ENCODE measurements at regions of chr12 and their contacts with region 1.

Region 1: GRCh38 chr12:111396726-111397445 is 8.8 kb upstream of the SH2B3 start:
- DNase-seq: peak; percentile 75 to 95 (median 88)
- ATAC-seq: peak; percentile 94
- H3K4me3 ChIP-seq: peak overlapping the region; percentile 27 to 33
- H3K4me3 Mint-ChIP-seq: peak overlapping the region; percentile 70
- H3K27ac ChIP-seq: no peak overlapping the region
- H3K27ac Mint-ChIP-seq: no peak overlapping the region
- H3K4me1 ChIP-seq: peaks cover 9% of the 10 kb centered on the region
- H3K4me1 Mint-ChIP-seq: peaks cover 6% of the 10 kb centered on the region
- H3K27me3 ChIP-seq: no peaks in the 10 kb centered on the region
- H3K27me3 Mint-ChIP-seq: no peaks in the 10 kb centered on the region
- CTCF ChIP-seq: peak; percentile 97

Region 2: DNA sequence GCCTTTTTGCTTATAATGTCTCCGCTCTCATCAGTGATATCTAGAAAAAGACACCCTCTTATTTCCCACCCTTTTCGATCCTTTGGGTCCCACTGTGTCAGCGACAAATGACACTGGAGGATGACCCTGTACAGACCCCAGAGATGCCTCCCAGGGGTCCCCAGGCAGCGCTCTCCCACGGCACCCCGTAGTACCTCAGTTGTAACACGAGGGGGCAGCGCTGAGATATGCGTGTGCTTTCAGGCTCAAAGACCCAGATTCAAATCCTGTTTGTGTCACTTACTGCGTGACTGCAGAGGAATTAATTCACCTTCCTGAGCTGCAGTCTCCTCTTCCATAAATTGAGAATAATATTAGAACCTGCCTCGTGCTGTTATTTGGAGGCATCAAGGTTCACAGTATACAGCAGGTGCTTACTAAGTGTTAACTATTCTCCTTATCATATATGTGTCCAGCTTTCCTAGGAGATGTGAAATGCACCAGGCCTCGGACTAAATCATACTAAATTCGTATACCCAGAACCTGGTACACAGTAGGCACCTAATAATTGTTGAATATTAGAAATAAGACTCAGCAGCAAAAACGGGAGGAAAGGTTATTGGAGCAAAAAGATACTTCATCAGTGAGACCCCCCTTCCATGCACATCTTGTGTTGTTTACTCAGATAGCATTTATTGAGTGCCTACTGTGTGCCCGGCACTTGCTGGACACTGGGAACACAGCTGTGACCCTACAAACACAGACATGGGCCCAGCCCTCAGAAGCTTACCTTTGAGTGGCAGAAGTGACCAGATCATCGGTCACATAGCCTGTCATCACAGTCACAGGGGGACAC is 127.9 kb before region 1 on chr12:
- CTCF ChIA-PET with region 1: no interaction called
- POLR2A ChIA-PET with region 1: no interaction called
- intact Hi-C with region 1: no loop called
- DNase-seq: peak in 4 of 9 experiments; percentile 1 to 23 (median 14)
- ATAC-seq: no peak
- H3K4me3 ChIP-seq: no peak overlapping the region
- H3K4me3 Mint-ChIP-seq: no peak overlapping the region
- H3K27ac ChIP-seq: no peak overlapping the region
- H3K27ac Mint-ChIP-seq: no peak overlapping the region
- H3K4me1 ChIP-seq: no peaks in the 10 kb centered on the region
- H3K4me1 Mint-ChIP-seq: peaks cover 2% of the 10 kb centered on the region
- H3K27me3 ChIP-seq: no peaks in the 10 kb centered on the region
- H3K27me3 Mint-ChIP-seq: peaks cover 7% of the 10 kb centered on the region
- CTCF ChIP-seq: peak; percentile 44

Region 3: DNA sequence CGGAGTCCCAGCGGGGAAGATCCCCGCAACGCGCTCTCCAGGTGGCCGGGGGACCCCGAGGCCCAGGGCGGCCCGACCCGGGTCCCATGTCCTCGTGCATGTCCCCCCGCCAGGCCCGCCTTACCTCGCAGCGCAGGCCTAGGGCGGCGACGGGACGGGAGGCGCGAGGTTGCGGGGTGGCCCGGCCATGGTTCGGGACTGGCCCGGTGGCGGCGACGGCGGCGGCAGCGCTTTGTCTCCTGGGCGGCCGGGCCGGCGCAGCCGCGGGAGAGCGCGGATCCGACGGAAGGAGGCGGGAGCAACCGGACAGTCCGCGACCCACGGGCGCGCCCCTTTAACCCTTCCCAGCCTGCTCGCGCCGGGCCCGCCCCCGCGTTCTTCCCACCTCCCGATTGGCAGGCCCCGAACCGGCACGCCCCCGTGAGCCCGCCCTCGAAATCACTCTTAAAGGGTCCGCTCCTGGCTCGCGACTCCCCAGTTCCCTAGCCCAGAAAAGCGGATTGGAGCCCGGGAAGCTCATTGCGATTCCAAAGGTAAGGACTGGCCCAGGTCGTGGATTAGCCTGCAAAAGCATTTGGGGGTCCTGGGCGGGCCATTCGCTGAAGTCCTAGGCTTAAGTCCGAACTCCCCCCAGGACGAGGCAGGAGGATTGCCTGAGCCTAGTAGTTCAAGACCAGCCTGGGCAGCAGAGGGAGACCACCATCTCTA is 27.9 kb before region 1 on chr12 and contains the start of gene PHETA1:
- CTCF ChIA-PET with region 1: interaction called, 15 read pairs
- POLR2A ChIA-PET with region 1: no interaction called
- intact Hi-C with region 1: no loop called
- DNase-seq: peak; percentile 41 to 83 (median 73)
- ATAC-seq: peak; percentile 94
- H3K4me3 ChIP-seq: peak within 1 kb of the TSS; percentile 64 to 66
- H3K4me3 Mint-ChIP-seq: peak within 1 kb of the TSS; percentile 87
- H3K27ac ChIP-seq: no peak within 1 kb of the TSS
- H3K27ac Mint-ChIP-seq: peak within 1 kb of the TSS; percentile 37
- H3K4me1 ChIP-seq: peaks cover 20% of the 10 kb centered on the region
- H3K4me1 Mint-ChIP-seq: peaks cover 23% of the 10 kb centered on the region
- H3K27me3 ChIP-seq: no peaks in the 10 kb centered on the region
- H3K27me3 Mint-ChIP-seq: peaks cover 2% of the 10 kb centered on the region
- CTCF ChIP-seq: no peak
- total RNA-seq, gene PHETA1: 0.79 to 0.83 TPM

Region 4: GRCh38 chr12:111428728-111429175 is 31.9 kb after region 1 on chr12:
- CTCF ChIA-PET with region 1: interaction called, 34 read pairs
- POLR2A ChIA-PET with region 1: no interaction called
- intact Hi-C with region 1: no loop called
- DNase-seq: peak in 2 of 9 experiments; percentile 39 to 58
- ATAC-seq: no peak
- H3K4me3 ChIP-seq: peak overlapping the region in 1 of 2 experiments; percentile 24
- H3K4me3 Mint-ChIP-seq: peak overlapping the region; percentile 49
- H3K27ac ChIP-seq: peak overlapping the region in 1 of 2 experiments; percentile 98
- H3K27ac Mint-ChIP-seq: peak overlapping the region; percentile 83
- H3K4me1 ChIP-seq: peaks cover 98% of the 10 kb centered on the region
- H3K4me1 Mint-ChIP-seq: peaks cover 82% of the 10 kb centered on the region
- H3K27me3 ChIP-seq: no peaks in the 10 kb centered on the region
- H3K27me3 Mint-ChIP-seq: no peaks in the 10 kb centered on the region
- CTCF ChIP-seq: no peak

Region 5: DNA sequence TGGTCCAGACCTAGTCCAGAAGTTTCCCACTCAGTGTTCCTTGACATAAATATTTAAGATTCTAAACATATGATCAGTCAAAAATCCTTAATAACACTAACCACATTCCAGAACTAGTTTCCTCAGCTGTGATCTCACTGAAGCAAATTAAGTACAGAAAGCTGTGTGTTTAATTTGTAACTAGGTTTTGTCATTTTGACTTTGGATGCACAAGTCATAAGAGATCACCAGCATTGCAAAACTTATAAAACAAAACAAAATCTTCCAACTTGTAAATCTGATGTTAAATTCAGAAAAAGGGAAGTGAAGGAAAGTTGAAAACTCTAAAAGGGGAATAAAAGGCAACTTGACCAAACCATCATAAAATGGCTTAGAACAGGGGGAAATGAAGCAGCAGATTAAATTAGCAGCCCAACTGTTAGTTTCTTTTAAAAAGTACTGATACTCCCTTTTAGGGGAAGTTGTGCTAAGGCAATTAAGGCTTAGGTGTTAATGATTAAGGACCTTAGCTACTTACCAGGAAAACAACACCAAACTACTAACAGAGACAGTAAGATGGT is 65.4 kb after region 1 on chr12:
- CTCF ChIA-PET with region 1: interaction called, 1,191 read pairs
- POLR2A ChIA-PET with region 1: no interaction called
- intact Hi-C with region 1: no loop called
- DNase-seq: no peak
- ATAC-seq: no peak
- H3K4me3 ChIP-seq: no peak overlapping the region
- H3K4me3 Mint-ChIP-seq: no peak overlapping the region
- H3K27ac ChIP-seq: no peak overlapping the region
- H3K27ac Mint-ChIP-seq: no peak overlapping the region
- H3K4me1 ChIP-seq: no peaks in the 10 kb centered on the region
- H3K4me1 Mint-ChIP-seq: no peaks in the 10 kb centered on the region
- H3K27me3 ChIP-seq: no peaks in the 10 kb centered on the region
- H3K27me3 Mint-ChIP-seq: no peaks in the 10 kb centered on the region
- CTCF ChIP-seq: no peak

Region 6: GRCh38 chr12:111488271-111488670 is 91.4 kb after region 1 on chr12:
- CTCF ChIA-PET with region 1: interaction called, 22 read pairs
- POLR2A ChIA-PET with region 1: no interaction called
- intact Hi-C with region 1: no loop called
- DNase-seq: no peak
- ATAC-seq: no peak
- H3K4me3 ChIP-seq: no peak overlapping the region
- H3K4me3 Mint-ChIP-seq: no peak overlapping the region
- H3K27ac ChIP-seq: no peak overlapping the region
- H3K27ac Mint-ChIP-seq: no peak overlapping the region
- H3K4me1 ChIP-seq: no peaks in the 10 kb centered on the region
- H3K4me1 Mint-ChIP-seq: no peaks in the 10 kb centered on the region
- H3K27me3 ChIP-seq: no peaks in the 10 kb centered on the region
- H3K27me3 Mint-ChIP-seq: no peaks in the 10 kb centered on the region
- CTCF ChIP-seq: no peak

Region 7: DNA sequence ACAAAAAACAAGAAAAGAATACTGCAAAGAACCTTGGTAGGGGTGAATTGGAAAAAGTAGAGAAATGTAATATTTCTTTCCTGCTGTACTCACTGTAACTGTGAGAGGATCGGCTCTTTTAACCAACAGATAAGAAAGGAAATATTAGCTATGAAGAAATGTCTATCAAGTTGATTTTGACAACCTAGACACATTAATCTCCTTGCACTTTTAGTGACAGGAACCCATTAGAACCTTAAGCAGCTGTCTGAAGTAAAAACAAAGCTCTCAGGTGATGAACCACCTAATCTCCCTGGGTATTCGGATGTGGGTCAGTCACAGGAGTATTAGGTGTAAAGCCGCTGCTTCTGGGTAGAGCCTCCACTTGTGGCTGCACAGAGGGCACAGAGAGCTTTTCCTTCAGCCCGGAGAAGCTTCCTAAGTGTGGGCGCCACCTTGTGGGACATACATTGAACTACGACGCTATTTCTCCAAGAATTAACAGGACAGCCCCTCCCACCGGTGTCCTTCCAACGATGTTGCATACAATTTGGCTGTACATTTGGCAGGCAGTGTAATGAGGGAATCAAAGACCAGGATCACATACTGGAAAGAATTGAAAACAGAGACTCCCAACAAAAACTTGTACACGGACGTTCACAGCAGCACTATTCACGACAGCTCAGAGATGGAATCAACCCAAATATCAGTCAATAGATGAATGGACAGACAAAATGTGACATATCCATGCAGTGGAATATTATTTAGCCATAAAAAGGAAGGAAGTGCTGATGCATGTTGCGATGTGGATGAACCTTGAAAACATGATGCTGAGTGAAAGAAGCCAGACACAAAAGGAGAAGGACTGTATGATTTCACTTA is 416.2 kb after region 1 on chr12:
- CTCF ChIA-PET with region 1: no interaction called
- POLR2A ChIA-PET with region 1: no interaction called
- intact Hi-C with region 1: loop called in 1 of 2 experiments (anchors 5 kb)
- DNase-seq: peak; percentile 26 to 85 (median 60)
- ATAC-seq: peak; percentile 100
- H3K4me3 ChIP-seq: no peak overlapping the region
- H3K4me3 Mint-ChIP-seq: no peak overlapping the region
- H3K27ac ChIP-seq: no peak overlapping the region
- H3K27ac Mint-ChIP-seq: no peak overlapping the region
- H3K4me1 ChIP-seq: peaks cover 6% of the 10 kb centered on the region
- H3K4me1 Mint-ChIP-seq: peaks cover 7% of the 10 kb centered on the region
- H3K27me3 ChIP-seq: no peaks in the 10 kb centered on the region
- H3K27me3 Mint-ChIP-seq: no peaks in the 10 kb centered on the region
- CTCF ChIP-seq: peak; percentile 81

Measured in CD8-positive, alpha-beta T cell (primary cell).